ENCODE measurements at regions of chr4 and their contacts with region 1.

Region 1: GRCh38 chr4:146243141-146243882 is 29.0 kb downstream of the REELD1 start:
- DNase-seq: peak; percentile 80
- H3K4me3 Mint-ChIP-seq: peak overlapping the region; percentile 80
- H3K27ac Mint-ChIP-seq: peak overlapping the region; percentile 91
- H3K4me1 Mint-ChIP-seq: peaks cover 31% of the 10 kb centered on the region
- H3K27me3 Mint-ChIP-seq: no peaks in the 10 kb centered on the region

Region 2: GRCh38 chr4:146132445-146132844 is 110.9 kb before region 1 on chr4:
- intact Hi-C with region 1: loop called (anchors 1 kb)
- DNase-seq: peak; percentile 73
- H3K4me3 Mint-ChIP-seq: peak overlapping the region; percentile 7
- H3K27ac Mint-ChIP-seq: peak overlapping the region; percentile 55
- H3K4me1 Mint-ChIP-seq: peaks cover 11% of the 10 kb centered on the region
- H3K27me3 Mint-ChIP-seq: peaks cover 6% of the 10 kb centered on the region

Region 3: GRCh38 chr4:146333187-146333894 is 90.0 kb after region 1 on chr4:
- intact Hi-C with region 1: loop called (anchors 1 kb)
- DNase-seq: peak; percentile 70
- H3K4me3 Mint-ChIP-seq: no peak overlapping the region
- H3K27ac Mint-ChIP-seq: no peak overlapping the region
- H3K4me1 Mint-ChIP-seq: no peaks in the 10 kb centered on the region
- H3K27me3 Mint-ChIP-seq: no peaks in the 10 kb centered on the region

Region 4: GRCh38 chr4:146458594-146458993 is 215.3 kb after region 1 on chr4:
- intact Hi-C with region 1: loop called (anchors 1 kb)
- DNase-seq: peak; percentile 71
- H3K4me3 Mint-ChIP-seq: peak overlapping the region; percentile 57
- H3K27ac Mint-ChIP-seq: peak overlapping the region; percentile 83
- H3K4me1 Mint-ChIP-seq: peaks cover 14% of the 10 kb centered on the region
- H3K27me3 Mint-ChIP-seq: no peaks in the 10 kb centered on the region

Region 5: DNA sequence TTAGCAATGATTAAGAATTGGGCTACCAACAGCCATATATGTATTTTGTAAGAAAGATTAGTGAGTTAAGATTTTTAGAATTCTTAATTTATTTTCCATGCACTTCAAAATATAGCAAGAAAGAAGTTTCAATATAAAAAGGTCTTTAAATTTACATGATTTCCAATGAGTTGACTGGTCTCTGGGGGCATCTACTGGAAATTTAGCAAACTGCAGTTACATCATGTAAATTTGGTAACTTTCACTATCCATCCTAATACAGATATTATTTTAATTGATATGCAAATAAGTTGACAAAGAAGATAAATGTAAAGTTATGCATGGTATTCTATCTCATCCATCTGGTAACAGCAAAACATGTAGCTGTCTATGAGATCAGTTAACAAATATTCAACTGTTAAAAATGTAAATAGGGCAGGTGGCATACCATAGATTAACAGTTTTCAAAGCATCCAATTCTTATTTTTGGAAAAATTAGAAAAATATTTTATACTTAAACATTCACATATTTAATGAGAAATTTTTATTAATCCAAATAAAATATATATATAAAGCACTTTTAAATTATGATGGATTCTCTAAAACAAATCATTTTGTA is 673.3 kb after region 1 on chr4:
- intact Hi-C with region 1: loop called (anchors 1 kb)
- DNase-seq: peak; percentile 73
- H3K4me3 Mint-ChIP-seq: no peak overlapping the region
- H3K27ac Mint-ChIP-seq: no peak overlapping the region
- H3K4me1 Mint-ChIP-seq: no peaks in the 10 kb centered on the region
- H3K27me3 Mint-ChIP-seq: peaks cover 8% of the 10 kb centered on the region

Region 6: GRCh38 chr4:147096667-147097604 is 853.6 kb after region 1 on chr4:
- intact Hi-C with region 1: loop called (anchors 2 kb)
- DNase-seq: no peak
- H3K4me3 Mint-ChIP-seq: no peak overlapping the region
- H3K27ac Mint-ChIP-seq: no peak overlapping the region
- H3K4me1 Mint-ChIP-seq: no peaks in the 10 kb centered on the region
- H3K27me3 Mint-ChIP-seq: peaks cover 2% of the 10 kb centered on the region